ENCODE measurements at regions of chr20 and their contacts with region 1.

Region 1: DNA sequence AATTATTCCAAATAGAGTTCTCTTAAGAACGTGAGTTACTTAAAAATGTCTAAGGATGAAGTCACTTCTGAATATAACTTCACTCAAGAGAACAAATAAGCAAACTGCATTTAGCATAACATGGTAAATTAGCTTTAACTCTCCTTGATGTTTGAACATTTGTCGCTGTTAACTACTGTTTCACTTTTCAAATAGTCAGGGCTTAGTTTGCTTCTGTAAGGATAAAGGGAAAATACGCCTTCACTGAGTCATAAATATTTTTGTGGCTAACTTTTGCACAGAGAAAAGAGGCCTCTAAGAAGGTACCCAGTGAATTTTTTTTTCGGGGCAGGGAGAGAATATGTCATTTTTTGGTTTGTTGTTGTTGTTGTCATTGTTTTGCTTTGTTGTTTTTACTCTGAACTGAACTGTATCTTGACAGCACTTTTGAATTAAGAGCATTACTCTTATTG is 8.1 kb downstream of the PTPN1 start:
- DNase-seq: no peak
- H3K4me3 Mint-ChIP-seq: peak overlapping the region; percentile 89
- H3K27ac Mint-ChIP-seq: peak overlapping the region; percentile 99
- H3K4me1 Mint-ChIP-seq: peaks cover 92% of the 10 kb centered on the region
- H3K27me3 Mint-ChIP-seq: no peaks in the 10 kb centered on the region

Region 2: GRCh38 chr20:50484276-50484976 is 33.9 kb before region 1 on chr20:
- intact Hi-C with region 1: loop called (anchors 2 kb)
- DNase-seq: no peak
- H3K4me3 Mint-ChIP-seq: peak overlapping the region; percentile 89
- H3K27ac Mint-ChIP-seq: peak overlapping the region; percentile 95
- H3K4me1 Mint-ChIP-seq: peaks cover 37% of the 10 kb centered on the region
- H3K27me3 Mint-ChIP-seq: peaks cover 2% of the 10 kb centered on the region

Region 3: DNA sequence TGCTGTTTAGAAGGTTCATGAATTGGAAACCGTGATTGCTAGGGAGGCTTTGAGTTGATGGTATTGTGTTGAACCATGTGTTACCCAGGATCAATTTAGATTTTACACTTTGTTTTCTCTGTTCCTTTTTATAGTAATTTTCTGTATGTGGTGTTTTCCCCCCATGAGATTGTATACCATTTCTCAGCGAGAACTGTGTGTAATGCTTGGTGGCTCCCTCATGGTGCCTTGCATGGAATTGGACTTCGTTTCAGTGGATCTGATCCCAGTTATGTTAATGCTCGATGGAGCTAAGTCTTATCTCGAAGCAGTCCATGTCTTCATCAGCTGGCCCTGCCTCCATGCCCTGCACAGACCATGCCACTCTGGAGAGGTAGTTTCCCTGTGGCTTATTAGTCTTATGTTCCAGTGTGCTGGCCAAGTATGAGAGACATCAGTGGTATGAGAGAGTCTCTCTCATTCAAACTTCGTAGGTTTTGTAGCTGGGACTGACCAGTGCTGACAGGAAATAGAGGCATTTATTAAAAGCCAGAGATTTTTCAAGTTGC is 10.6 kb after region 1 on chr20:
- intact Hi-C with region 1: loop called (anchors 1 kb)
- DNase-seq: no peak
- H3K4me3 Mint-ChIP-seq: no peak overlapping the region
- H3K27ac Mint-ChIP-seq: peak overlapping the region; percentile 18
- H3K4me1 Mint-ChIP-seq: peaks cover 36% of the 10 kb centered on the region
- H3K27me3 Mint-ChIP-seq: no peaks in the 10 kb centered on the region

Region 4: GRCh38 chr20:50546729-50547314 is 28.5 kb after region 1 on chr20:
- intact Hi-C with region 1: loop called (anchors 1 kb)
- DNase-seq: no peak
- H3K4me3 Mint-ChIP-seq: peak overlapping the region; percentile 81
- H3K27ac Mint-ChIP-seq: peak overlapping the region; percentile 86
- H3K4me1 Mint-ChIP-seq: peaks cover 67% of the 10 kb centered on the region
- H3K27me3 Mint-ChIP-seq: no peaks in the 10 kb centered on the region

Region 5: DNA sequence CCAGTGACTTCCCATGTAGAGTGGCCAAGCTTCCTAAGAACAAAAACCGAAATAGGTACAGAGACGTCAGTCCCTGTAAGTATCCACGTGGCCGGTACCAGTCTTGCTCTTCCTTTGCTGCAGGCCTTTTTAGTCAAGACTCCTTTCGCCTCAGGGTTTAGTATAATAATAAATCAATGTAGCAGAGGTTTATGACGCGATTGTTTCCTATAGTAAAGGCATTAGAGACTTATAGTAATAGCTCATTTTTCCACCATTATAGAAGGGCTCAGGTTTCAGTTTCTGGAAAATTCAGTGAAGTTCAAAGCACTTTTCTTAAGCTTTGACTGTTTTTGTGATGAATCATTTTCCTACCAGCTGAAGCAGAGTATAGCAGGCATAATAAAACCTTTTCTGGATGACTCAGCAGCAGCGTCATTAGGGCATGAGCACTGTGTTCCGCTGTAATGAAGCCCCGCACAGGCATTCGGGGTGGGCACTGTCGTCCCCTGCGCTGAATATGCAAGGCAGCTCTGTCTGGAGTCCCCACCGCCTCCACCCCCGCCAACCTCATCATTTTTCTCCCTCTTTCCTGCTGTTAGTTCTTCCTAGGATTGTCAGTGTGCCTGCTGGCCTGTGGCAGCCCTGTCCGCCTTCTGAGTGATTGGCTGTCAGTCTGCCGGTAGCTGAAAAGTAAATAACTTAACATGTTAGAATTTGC is 43.2 kb after region 1 on chr20:
- intact Hi-C with region 1: loop called (anchors 1 kb)
- DNase-seq: peak; percentile 32
- H3K4me3 Mint-ChIP-seq: peak overlapping the region; percentile 87
- H3K27ac Mint-ChIP-seq: peak overlapping the region; percentile 98
- H3K4me1 Mint-ChIP-seq: peaks cover 62% of the 10 kb centered on the region
- H3K27me3 Mint-ChIP-seq: no peaks in the 10 kb centered on the region

Region 6: DNA sequence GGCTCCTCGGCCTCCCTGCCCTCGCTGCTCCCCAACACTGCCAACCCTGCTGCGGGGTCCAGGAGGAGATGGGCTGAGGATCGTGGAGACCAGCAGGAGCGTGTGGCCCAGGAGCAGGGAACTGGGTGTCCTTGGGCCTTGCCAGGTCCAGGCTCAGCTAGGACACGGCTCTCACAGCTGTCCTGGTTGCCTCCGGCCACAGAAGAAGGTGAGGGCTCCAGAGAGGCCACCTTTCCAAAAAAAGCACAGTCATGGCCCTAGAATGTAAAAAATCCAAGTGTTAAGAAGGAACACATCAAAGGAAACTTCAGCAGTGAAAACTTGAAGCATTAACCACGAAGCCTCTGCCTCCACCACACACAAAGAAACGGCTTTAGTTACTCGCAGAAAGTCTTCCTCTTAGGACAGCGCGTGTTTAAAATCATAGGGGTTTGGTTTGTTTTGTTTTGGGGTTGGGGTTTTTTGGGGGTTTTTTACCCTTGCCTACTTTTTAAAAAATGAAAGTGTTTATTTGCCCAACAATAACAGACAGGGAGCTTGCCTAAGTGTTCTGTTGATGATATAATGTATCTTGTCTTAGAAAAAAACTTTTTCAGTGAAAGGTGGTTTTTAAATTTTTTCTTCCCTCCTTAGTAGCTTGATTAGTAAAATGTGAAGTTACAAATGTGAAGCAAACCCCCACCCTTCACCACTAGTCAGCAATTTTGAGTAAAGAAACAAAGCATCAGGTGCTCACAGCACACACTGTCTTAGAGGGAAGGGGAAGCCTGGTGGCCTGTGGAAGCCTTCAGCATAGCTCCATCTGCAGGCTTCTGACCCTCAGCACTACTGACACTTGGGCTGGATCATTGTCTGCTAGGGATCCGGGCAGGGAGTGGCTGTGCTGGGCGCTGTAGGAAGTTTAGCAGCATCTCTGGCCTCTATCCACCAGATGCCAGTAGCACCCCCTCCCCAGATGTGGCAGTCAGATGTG is 51.9 kb after region 1 on chr20:
- intact Hi-C with region 1: loop called (anchors 1 kb)
- DNase-seq: peak; percentile 47
- H3K4me3 Mint-ChIP-seq: peak overlapping the region; percentile 51
- H3K27ac Mint-ChIP-seq: peak overlapping the region; percentile 87
- H3K4me1 Mint-ChIP-seq: peaks cover 69% of the 10 kb centered on the region
- H3K27me3 Mint-ChIP-seq: no peaks in the 10 kb centered on the region